Posterior vena cava (tissue), 2 donors: ENCODE measurements at regions of chr6 and their contacts with region 1.

Region 1: DNA sequence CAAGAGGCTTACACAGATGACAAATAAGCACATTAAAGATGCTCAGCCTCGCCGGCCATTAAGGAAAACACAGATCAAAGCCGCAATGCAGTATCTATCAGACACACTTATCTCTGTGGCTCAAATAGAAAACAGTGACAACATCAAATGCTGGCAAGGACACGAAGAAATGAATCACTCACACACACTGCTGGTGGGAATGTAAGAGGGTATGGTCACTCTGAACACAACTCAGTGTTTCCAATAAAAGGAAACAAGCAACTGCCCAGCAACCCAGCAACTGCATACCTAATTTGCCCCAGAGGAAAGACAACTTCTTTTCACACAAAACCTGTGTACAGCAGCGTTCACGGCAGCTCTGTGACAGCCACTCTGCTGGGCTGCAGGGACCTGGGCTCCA is 155.8 kb downstream of the WDR27 start:
- DNase-seq: no peak

Region 2: DNA sequence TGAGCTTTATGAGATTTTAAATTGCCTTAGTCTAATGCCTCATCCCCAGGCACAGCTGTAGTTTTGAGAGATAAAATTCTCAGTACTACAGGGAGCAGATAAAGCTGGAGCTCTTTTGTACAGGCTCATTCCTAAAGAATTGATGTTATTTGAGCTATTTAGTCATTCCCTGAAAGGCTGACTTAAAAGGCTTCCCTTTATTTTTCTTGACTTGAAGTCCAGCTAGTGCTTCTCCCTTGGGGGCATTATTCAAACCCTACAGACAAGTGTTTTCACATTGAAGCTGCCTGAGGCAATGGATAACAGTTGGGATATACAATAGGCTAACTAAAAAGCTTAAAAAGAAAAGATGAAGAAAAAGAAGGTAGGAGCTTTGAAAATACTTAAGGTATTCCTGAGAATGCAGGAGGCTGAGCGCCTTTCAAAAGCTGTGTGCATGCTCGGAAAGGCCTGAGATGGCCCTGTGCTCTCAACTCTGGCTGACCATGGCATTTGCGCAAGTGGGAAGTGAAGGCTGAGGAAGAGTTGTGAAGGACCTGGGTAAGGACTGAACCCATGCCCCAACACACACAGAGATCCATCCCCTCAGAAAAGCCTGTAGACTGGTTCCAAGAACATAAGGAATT is 789.9 kb before region 1 on chr6:
- intact Hi-C with region 1: loop called in 1 of 2 experiments (anchors 5 kb)
- DNase-seq: no peak